MCF 10A (cell line): ENCODE measurements at regions of chr12 and their contacts with region 1.

Region 1: GRCh38 chr12:122225683-122226407 is at the start of gene DIABLO:
- DNase-seq: peak; percentile 99
- H3K4me3 Mint-ChIP-seq: peak within 1 kb of the TSS; percentile 92
- H3K27ac Mint-ChIP-seq: peak within 1 kb of the TSS; percentile 96
- H3K4me1 Mint-ChIP-seq: peaks cover 16% of the 10 kb centered on the region
- H3K27me3 Mint-ChIP-seq: no peaks in the 10 kb centered on the region
- CTCF ChIP-seq: no peak
- total RNA-seq, gene DIABLO: 69.6 and 70.1 TPM in 2 replicates

Region 2: DNA sequence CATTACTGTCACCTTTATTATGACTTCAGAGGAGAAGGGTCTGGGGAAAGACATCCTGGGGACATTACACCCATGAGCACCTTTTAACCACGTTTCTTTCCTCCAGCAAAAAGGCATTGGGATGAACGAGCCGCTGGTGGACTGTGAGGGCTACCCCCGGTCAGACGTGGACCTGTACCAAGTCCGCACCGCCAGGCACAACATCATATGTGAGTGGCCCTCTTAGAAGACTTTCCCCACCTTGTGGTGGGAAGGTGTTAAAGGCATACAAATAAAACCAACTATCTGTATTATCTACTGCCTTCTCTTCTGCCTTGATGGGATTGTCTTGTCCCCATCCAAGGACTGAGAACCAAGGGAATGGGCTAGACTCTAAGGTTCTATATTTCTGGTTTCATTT is 331.2 kb before region 1 on chr12:
- CTCF ChIA-PET with region 1: no interaction called
- POLR2A ChIA-PET with region 1: no interaction called
- intact Hi-C with region 1: no loop called
- DNase-seq: no peak
- H3K4me3 Mint-ChIP-seq: peak overlapping the region; percentile 59
- H3K27ac Mint-ChIP-seq: peak overlapping the region; percentile 97
- H3K4me1 Mint-ChIP-seq: peaks cover 25% of the 10 kb centered on the region
- H3K27me3 Mint-ChIP-seq: no peaks in the 10 kb centered on the region
- CTCF ChIP-seq: no peak

Region 3: DNA sequence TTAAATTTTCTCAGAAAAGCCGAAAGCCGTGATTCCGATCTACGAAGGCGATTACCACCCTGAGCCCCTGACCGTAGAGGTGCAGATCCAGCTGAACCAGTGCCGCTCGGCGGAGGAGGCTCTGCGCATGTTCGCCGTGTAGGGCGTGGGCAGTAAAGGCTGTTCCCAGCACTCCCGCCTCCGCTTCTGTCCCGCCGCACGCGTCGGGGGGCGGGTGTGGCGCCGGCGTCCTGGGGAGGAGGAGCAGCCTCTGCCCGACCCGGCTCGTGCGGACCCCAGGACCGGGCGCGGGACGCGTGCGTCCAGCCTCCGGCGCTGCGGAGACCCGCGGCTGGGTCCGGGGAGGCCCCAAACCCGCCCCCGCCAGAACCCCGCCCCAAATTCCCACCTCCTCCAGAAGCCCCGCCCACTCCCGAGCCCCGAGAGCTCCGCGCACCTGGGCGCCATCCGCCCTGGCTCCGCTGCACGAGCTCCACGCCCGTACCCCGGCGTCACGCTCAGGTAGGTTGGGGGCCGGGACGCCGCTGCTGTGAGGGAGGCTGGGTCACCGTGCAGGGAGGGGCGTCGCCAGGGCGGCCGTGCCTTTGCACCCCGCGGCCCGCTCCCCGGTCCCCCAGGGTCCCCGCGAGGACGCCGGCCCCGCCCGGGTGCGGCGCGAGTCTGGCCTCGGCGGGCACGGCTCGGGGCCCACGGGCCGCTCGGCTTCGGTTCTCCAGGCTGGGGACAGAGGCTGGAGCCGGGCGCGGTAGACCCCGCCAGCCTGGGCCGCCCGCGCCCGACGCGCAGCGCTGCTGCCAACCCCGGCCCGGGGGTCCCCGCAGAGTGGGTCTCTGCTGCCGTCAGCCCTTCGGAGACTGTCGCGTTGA is 22.3 kb before region 1 on chr12 and contains the start of gene B3GNT4:
- CTCF ChIA-PET with region 1: no interaction called
- POLR2A ChIA-PET with region 1: interaction called, 23 read pairs
- intact Hi-C with region 1: no loop called
- DNase-seq: peak; percentile 62
- H3K4me3 Mint-ChIP-seq: peak within 1 kb of the TSS; percentile 77
- H3K27ac Mint-ChIP-seq: no peak within 1 kb of the TSS
- H3K4me1 Mint-ChIP-seq: peaks cover 6% of the 10 kb centered on the region
- H3K27me3 Mint-ChIP-seq: no peaks in the 10 kb centered on the region
- CTCF ChIP-seq: no peak
- total RNA-seq, gene B3GNT4: 1.5 and 1.8 TPM in 2 replicates

Region 4: GRCh38 chr12:122215771-122216170 is 10.1 kb before region 1 on chr12:
- CTCF ChIA-PET with region 1: interaction called, 11 read pairs
- POLR2A ChIA-PET with region 1: interaction called, 24 read pairs
- intact Hi-C with region 1: no loop called
- DNase-seq: no peak
- H3K4me3 Mint-ChIP-seq: no peak overlapping the region
- H3K27ac Mint-ChIP-seq: no peak overlapping the region
- H3K4me1 Mint-ChIP-seq: no peaks in the 10 kb centered on the region
- H3K27me3 Mint-ChIP-seq: no peaks in the 10 kb centered on the region
- CTCF ChIP-seq: no peak

Region 5: DNA sequence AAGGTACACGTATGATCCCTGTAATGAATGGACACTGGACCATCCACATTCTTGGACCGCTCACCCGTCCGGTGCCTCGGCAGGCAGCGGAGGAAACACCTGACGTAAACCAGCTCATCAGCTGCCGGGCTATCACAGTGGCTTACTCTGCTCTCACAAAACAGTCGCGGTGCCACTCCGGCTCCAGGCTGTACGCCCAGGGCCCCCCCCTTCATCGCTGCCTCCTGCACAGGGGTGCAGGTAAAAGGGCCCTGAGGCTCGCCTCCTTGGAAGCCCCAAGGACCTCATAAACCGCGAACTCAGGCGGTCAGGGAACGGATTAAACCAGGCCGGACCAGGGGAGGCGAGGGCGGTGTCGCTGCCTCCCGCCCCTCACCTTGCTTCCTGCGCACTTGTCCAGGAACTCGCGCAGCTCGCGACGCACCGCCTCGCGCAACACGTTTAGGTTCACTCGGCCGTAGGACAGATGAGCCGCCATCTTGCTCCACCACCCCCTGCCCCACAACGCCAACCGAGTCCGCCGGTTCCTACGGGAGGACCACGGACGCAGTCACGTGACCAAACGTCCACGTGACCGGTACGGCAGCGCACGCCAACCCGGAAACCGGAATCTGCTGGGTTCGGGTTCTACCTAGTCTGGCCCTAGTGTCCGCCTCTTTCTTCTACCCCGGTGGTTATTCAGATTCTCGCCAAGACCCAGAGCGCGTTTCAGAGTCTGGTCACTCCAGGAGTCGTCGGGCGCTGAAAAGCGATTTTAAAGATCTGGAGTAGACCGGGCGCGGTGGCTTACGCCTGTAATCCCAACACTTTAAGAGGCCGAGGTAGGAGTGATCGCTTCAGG is 40.3 kb after region 1 on chr12 and contains the start of gene VPS33A:
- CTCF ChIA-PET with region 1: no interaction called
- POLR2A ChIA-PET with region 1: interaction called, 25 read pairs
- intact Hi-C with region 1: no loop called
- DNase-seq: peak; percentile 94
- H3K4me3 Mint-ChIP-seq: peak within 1 kb of the TSS; percentile 96
- H3K27ac Mint-ChIP-seq: peak within 1 kb of the TSS; percentile 95
- H3K4me1 Mint-ChIP-seq: no peaks in the 10 kb centered on the region
- H3K27me3 Mint-ChIP-seq: no peaks in the 10 kb centered on the region
- CTCF ChIP-seq: no peak
- total RNA-seq, gene VPS33A: 16.5 and 22.2 TPM in 2 replicates